HCT116 (cell line): ENCODE measurements at regions of chr9 and their contacts with region 1.

Region 1: DNA sequence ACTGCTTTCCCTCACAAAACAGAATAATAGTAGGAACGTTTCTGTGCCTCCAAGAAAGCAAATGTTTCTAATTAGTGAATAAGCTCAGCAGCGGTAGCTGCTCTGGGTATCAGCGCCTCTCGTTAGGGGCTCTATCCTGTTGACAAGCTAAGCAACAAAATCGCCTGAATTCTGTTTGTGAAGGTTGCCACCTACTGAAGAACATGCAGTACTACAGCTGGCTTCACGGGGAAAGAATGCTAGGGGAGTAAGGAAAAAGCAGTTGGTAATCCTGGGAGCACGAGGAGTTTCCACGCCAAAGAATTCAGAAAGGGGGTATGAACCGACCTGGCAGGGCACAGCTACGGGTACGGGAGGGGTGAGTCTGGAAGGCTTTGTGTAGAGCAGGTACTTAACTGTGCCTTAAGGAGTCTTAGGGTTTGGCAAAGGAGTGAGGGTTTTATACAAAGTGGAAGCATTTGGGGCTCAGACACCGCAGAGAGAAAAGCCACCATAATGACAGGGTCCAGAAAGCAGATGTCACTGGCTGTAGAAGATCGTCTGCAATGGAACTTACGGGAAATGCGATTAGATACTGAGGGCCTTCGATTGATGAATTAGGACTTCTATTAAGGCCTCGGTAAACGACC is 171.7 kb downstream of the TTC39B start:
- DNase-seq: peak; percentile 60
- ATAC-seq: peak; percentile 93
- H3K4me3 ChIP-seq: no peak overlapping the region; a peak in 1 of 4 replicates
- H3K27ac ChIP-seq: no peak overlapping the region
- H3K4me1 ChIP-seq: peaks cover 0 to 16% of the 10 kb centered on the region in 2 experiments; a peak in 2 of 4 replicates
- H3K27me3 ChIP-seq: no peaks in the 10 kb centered on the region
- CTCF ChIP-seq: peak; percentile 67 to 88 (median 85)
- POLR2A ChIP-seq: no peak
- RAD21 ChIP-seq: peak; percentile 78

Region 2: DNA sequence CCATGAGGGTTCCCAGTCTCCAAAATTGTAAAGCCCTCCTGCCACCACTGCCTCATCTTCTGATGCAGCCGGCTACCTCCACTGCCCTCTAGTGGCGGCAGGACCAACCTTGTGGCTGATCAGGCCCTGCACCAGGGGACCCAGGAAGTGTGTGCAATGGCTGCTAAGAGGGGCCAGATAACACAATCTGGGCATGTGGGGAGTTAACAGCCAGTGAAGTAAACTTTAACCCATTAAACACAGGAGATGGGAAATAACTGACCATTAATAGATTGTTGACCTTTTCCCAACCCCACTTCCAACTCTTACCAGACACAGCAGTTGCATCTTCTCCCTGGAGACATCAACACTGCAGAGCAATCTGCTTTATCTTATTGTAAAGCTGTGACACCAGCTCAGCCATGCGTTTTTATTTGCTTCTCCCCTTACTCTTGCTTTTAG is 288.4 kb before region 1 on chr9:
- CTCF ChIA-PET with region 1: interaction called, 7 read pairs
- POLR2A ChIA-PET with region 1: no interaction called
- RAD21 ChIA-PET with region 1: no interaction called
- intact Hi-C with region 1: loop called (anchors 5 kb)
- DNase-seq: peak; percentile 47
- ATAC-seq: peak; percentile 99
- H3K4me3 ChIP-seq: no peak overlapping the region
- H3K27ac ChIP-seq: no peak overlapping the region
- H3K4me1 ChIP-seq: no peaks in the 10 kb centered on the region
- H3K27me3 ChIP-seq: peaks cover 20% of the 10 kb centered on the region; the same call in 1 of the 2 replicates
- CTCF ChIP-seq: peak; percentile 37 to 93 (median 91); a peak in 5 of 6 replicates
- POLR2A ChIP-seq: no peak
- RAD21 ChIP-seq: peak; percentile 51

Region 3: GRCh38 chr9:15058236-15058635 is 77.0 kb before region 1 on chr9:
- CTCF ChIA-PET with region 1: no interaction called
- POLR2A ChIA-PET with region 1: no interaction called
- RAD21 ChIA-PET with region 1: no interaction called
- intact Hi-C with region 1: loop called (anchors 5 kb)
- DNase-seq: no peak
- ATAC-seq: no peak
- H3K4me3 ChIP-seq: no peak overlapping the region
- H3K27ac ChIP-seq: no peak overlapping the region
- H3K4me1 ChIP-seq: no peaks in the 10 kb centered on the region
- H3K27me3 ChIP-seq: peaks cover 8% of the 10 kb centered on the region
- CTCF ChIP-seq: no peak
- POLR2A ChIP-seq: no peak
- RAD21 ChIP-seq: no peak

Region 4: DNA sequence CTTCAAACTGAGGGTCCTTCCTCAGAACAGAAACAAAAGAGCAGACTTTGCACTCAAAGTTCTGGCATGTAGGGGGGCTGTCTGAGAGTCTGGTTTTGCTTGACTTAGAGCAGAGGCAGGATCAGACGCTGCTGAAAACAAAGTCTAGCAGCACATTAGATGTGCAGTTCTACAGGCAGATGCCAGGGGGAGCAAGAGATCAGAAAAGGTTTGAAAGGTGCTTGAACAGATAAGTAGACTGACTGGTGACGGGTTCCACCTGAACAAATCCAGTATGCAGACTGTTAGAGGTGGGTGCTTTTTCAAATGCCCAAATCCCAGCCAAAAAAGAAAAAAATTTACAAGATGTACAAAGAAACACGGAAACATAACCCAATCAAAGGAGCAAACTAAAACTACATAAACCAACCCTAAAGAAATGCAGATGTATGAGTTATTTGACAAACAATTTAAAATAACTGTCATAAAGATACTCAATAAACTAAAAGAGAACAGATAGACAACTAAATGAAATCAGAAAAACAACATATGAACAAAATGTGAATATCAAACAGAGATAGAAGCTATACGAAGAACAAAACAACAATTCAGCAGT is 30.4 kb before region 1 on chr9:
- CTCF ChIA-PET with region 1: interaction called, 6 read pairs
- POLR2A ChIA-PET with region 1: no interaction called
- RAD21 ChIA-PET with region 1: no interaction called
- intact Hi-C with region 1: loop called (anchors 2 kb)
- DNase-seq: peak; percentile 16
- ATAC-seq: peak; percentile 92
- H3K4me3 ChIP-seq: no peak overlapping the region
- H3K27ac ChIP-seq: no peak overlapping the region
- H3K4me1 ChIP-seq: no peaks in the 10 kb centered on the region
- H3K27me3 ChIP-seq: peaks cover 9% of the 10 kb centered on the region; the same call in 1 of the 2 replicates
- CTCF ChIP-seq: peak; percentile 54 to 74 (median 74); a peak in 5 of 6 replicates
- POLR2A ChIP-seq: no peak
- RAD21 ChIP-seq: peak; percentile 52

Region 5: GRCh38 chr9:15191378-15191777 is 56.1 kb after region 1 on chr9:
- CTCF ChIA-PET with region 1: no interaction called
- POLR2A ChIA-PET with region 1: no interaction called
- RAD21 ChIA-PET with region 1: no interaction called
- intact Hi-C with region 1: no loop called
- DNase-seq: no peak
- ATAC-seq: no peak
- H3K4me3 ChIP-seq: no peak overlapping the region
- H3K27ac ChIP-seq: no peak overlapping the region
- H3K4me1 ChIP-seq: no peaks in the 10 kb centered on the region
- H3K27me3 ChIP-seq: no peaks in the 10 kb centered on the region
- CTCF ChIP-seq: no peak
- POLR2A ChIP-seq: no peak
- RAD21 ChIP-seq: no peak

Region 6: DNA sequence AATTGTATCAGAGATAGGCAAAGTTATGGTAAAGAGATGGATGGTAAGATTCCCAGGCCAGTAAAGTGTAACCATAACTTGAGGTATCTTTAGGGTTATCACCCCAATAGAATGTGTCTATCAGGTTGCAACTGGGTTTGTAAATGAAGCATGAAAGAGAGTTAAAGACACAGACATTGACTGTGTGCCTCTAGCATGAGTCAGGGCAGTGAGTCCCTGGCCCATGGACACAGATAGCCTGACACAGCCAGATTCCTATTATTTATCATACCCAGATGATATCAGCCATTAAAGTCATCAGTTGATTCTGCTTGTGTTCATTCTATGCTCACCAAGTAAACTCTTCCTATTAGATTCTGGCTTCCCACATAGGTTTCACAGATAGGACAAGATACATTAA is 253.9 kb after region 1 on chr9:
- CTCF ChIA-PET with region 1: no interaction called
- POLR2A ChIA-PET with region 1: no interaction called
- RAD21 ChIA-PET with region 1: no interaction called
- intact Hi-C with region 1: no loop called
- DNase-seq: no peak
- ATAC-seq: no peak
- H3K4me3 ChIP-seq: no peak overlapping the region
- H3K27ac ChIP-seq: no peak overlapping the region
- H3K4me1 ChIP-seq: no peaks in the 10 kb centered on the region
- H3K27me3 ChIP-seq: no peaks in the 10 kb centered on the region
- CTCF ChIP-seq: no peak
- POLR2A ChIP-seq: no peak
- RAD21 ChIP-seq: no peak